ENCODE measurements at regions of chr20 and their contacts with region 1.

Region 1: GRCh38 chr20:5215672-5216304 is 89.0 kb downstream of the CDS2 start:
- DNase-seq: no peak
- H3K4me3 ChIP-seq: no peak overlapping the region
- H3K27ac ChIP-seq: no peak overlapping the region
- H3K27me3 ChIP-seq: no peaks in the 10 kb centered on the region
- CTCF ChIP-seq: no peak

Region 2: DNA sequence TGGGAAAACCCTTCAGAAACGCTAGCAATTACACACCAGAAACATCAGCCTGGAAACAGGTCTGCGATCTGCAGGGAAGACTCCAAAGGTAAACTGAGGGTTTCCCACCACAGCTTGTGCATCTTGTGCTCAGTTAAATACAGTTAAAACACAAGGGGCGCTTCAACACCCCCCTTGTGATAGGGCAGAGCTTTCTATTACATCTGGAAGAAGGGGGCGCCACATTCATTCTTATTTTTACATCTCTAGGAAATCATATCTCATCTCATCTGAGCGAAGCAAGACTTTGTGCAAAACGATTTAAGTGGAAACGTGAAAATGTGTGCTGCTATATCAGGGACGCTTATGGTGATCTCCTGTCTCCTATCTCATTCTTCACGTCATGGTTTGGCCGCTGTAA is 435.5 kb before region 1 on chr20:
- CTCF ChIA-PET with region 1: no interaction called
- POLR2A ChIA-PET with region 1: no interaction called
- DNase-seq: no peak
- H3K4me3 ChIP-seq: no peak overlapping the region
- H3K27ac ChIP-seq: no peak overlapping the region
- H3K27me3 ChIP-seq: peaks cover 8% of the 10 kb centered on the region
- CTCF ChIP-seq: 0 out of 2 replicates have a peak, but pooled peaks have one; percentile 11

Region 3: GRCh38 chr20:5205348-5206210 is 10.2 kb before region 1 on chr20:
- CTCF ChIA-PET with region 1: interaction called, 157 read pairs
- POLR2A ChIA-PET with region 1: no interaction called
- DNase-seq: peak; percentile 47
- H3K4me3 ChIP-seq: no peak overlapping the region
- H3K27ac ChIP-seq: no peak overlapping the region
- H3K27me3 ChIP-seq: no peaks in the 10 kb centered on the region
- CTCF ChIP-seq: peak; percentile 97

Region 4: DNA sequence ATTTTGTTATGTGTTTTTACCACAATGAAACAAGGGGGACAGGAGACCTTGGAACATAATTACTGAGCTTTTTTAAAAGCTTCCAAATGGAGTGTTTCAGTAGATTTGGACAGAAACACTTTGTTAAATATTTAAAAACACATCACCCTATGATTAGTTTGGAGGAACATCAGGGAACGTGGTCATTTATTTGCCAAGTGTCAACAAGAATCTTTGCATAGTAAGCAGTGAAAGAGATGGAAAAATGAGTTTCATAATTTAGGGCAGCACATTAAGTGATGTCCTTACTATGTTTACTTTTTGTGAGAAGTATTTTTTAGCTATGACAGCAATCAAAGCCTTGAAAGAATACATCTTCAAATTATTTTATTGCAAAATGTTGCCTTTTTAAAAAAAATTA is 18.4 kb after region 1 on chr20:
- CTCF ChIA-PET with region 1: no interaction called
- POLR2A ChIA-PET with region 1: no interaction called
- DNase-seq: no peak
- H3K4me3 ChIP-seq: no peak overlapping the region
- H3K27ac ChIP-seq: no peak overlapping the region
- H3K27me3 ChIP-seq: peaks cover 9% of the 10 kb centered on the region
- CTCF ChIP-seq: no peak

Region 5: GRCh38 chr20:5788385-5788895 is 572.7 kb after region 1 on chr20:
- CTCF ChIA-PET with region 1: no interaction called
- POLR2A ChIA-PET with region 1: no interaction called
- DNase-seq: peak; percentile 77
- H3K4me3 ChIP-seq: no peak overlapping the region
- H3K27ac ChIP-seq: no peak overlapping the region
- H3K27me3 ChIP-seq: no peaks in the 10 kb centered on the region
- CTCF ChIP-seq: peak; percentile 91